ENCODE measurements at regions of chr4 and their contacts with region 1.

Region 1: DNA sequence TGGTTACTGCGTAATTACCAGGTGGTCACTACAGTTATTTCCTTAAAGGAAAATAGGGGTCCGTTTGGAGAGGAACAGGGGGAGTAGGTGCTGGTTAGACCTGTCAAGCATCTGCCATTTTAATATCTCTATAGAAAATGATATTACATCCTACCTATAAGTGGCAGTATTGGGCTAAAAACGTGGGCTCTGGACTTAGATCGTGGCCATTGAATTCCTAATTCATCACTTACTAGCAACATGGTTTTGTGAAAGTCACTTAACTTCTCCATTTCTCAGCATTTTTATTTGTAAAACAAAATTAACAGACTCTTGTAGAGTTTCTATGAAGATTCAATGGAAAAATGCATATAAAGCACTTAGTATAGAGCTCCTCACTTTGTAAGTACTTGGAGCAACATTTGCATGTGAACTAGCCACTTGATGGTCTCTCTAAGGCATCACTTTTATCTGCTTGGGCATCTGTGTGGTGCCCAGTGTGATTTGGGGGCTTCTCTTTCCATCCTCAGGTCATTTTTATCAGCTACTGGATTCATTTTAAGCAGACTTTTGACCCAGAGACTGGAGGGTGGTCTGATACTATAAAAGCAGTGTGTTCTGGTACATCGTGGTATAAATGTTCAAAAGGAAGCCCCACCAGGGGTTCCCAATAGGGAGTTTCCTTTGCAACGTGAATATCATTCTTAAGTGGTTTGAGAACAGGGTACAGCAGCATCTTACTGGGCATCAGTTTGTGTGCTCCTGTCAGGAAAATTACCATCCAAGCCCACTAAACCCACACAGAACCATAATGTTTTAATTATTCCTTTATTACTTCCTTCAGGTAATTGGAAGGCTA is 42.7 kb upstream of the RASSF6 start:
- DNase-seq: no peak
- ATAC-seq: peak; percentile 75 to 95 (median 92)
- H3K4me3 ChIP-seq: no peak overlapping the region
- H3K27ac ChIP-seq: no peak overlapping the region
- H3K4me1 ChIP-seq: no peaks in the 10 kb centered on the region
- H3K27me3 ChIP-seq: no peaks in the 10 kb centered on the region
- CTCF ChIP-seq: peak in 3 of 4 donors; percentile 32 to 49 (median 35)

Region 2: GRCh38 chr4:73573794-73574406 is 89.0 kb before region 1 on chr4:
- intact Hi-C with region 1: no loop called
- DNase-seq: peak; percentile 52 to 82 (median 70)
- ATAC-seq: peak; percentile 92 to 99 (median 97)
- H3K4me3 ChIP-seq: no peak overlapping the region
- H3K27ac ChIP-seq: peak overlapping the region in 1 of 4 donors; percentile 37
- H3K4me1 ChIP-seq: peaks cover 0 to 16% (median 15%) of the 10 kb centered on the region in 3 donors
- H3K27me3 ChIP-seq: no peaks in the 10 kb centered on the region
- CTCF ChIP-seq: peak; percentile 70 to 83 (median 73)

Region 3: DNA sequence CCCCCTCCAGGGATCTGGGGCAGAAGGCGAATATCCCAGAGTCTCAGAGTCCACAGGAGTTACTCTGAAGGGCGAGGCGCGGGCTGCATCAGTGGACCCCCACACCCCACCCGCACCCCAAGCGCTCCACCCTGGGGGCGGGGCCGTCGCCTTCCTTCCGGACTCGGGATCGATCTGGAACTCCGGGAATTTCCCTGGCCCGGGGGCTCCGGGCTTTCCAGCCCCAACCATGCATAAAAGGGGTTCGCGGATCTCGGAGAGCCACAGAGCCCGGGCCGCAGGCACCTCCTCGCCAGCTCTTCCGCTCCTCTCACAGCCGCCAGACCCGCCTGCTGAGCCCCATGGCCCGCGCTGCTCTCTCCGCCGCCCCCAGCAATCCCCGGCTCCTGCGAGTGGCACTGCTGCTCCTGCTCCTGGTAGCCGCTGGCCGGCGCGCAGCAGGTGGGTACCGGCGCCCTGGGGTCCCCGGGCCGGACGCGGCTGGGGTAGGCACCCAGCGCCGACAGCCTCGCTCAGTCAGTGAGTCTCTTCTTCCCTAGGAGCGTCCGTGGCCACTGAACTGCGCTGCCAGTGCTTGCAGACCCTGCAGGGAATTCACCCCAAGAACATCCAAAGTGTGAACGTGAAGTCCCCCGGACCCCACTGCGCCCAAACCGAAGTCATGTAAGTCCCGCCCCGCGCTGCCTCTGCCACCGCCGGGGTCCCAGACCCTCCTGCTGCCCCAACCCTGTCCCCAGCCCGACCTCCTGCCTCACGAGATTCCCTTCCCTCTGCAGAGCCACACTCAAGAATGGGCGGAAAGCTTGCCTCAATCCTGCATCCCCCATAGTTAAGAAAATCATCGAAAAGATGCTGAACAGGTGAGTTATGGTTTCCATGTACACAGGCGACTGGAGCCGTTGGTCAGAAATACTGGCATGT is 206.5 kb after region 1 on chr4 and contains the start of gene CXCL1:
- intact Hi-C with region 1: loop called in 2 of 3 experiments (anchors 10 kb)
- DNase-seq: peak; percentile 39 to 80 (median 52)
- ATAC-seq: peak; percentile 70 to 79 (median 74)
- H3K4me3 ChIP-seq: peak within 1 kb of the TSS; percentile 38 to 68 (median 46)
- H3K27ac ChIP-seq: peak within 1 kb of the TSS in 3 of 4 donors; percentile 6 to 78 (median 67)
- H3K4me1 ChIP-seq: no peaks in the 10 kb centered on the region
- H3K27me3 ChIP-seq: no peaks in the 10 kb centered on the region
- CTCF ChIP-seq: no peak
- total RNA-seq, gene CXCL1: 2.5 to 35.4 (median 6.3) TPM

Region 4: GRCh38 chr4:74038161-74039064 is 375.5 kb after region 1 on chr4 and contains the start of gene CXCL3:
- intact Hi-C with region 1: no loop called
- DNase-seq: peak; percentile 73 to 91 (median 84)
- ATAC-seq: peak; percentile 91 to 96 (median 94)
- H3K4me3 ChIP-seq: peak within 1 kb of the TSS; percentile 57 to 70 (median 64)
- H3K27ac ChIP-seq: peak within 1 kb of the TSS in 3 of 4 donors; percentile 1 to 79 (median 57)
- H3K4me1 ChIP-seq: no peaks in the 10 kb centered on the region
- H3K27me3 ChIP-seq: no peaks in the 10 kb centered on the region
- CTCF ChIP-seq: peak in 3 of 4 donors; percentile 13 to 31 (median 19)
- total RNA-seq, gene CXCL3: 0.60 to 7.3 (median 1.3) TPM

Region 5: DNA sequence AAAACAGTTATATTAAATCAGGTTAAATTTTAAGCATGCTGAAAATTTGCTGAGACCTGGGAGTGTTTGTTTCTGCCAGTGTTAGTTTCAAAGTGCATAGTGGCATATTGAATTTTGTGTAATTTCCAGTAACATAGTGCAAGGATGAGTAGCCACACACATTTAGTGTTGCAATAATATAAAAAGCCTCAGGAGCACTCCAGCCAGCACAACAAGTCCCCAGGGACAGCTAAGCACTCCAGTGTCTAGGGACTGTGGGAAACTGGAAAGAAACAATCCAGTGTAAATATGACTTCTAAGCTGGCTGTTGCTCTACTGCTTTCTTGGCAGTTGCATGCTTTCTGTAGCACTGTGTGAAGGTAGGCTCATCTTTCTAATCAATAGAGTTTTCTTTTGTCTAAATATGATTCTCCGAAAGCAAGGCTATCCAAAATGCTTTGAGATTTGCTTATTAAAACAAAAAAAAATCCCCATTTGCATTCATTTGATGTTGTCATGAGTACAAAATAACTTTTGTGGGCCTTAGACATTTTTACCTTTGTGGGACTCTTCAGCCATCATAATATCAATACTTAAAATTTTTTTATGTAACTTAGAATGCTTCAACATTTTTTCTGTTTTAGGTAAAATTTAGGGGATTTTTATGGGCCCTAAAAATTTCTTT is 460.3 kb after region 1 on chr4:
- intact Hi-C with region 1: loop called in 1 of 3 experiments (anchors 10 kb)
- DNase-seq: peak in 3 of 6 donors; percentile 32 to 40 (median 36)
- ATAC-seq: peak; percentile 60 to 99 (median 96)
- H3K4me3 ChIP-seq: no peak overlapping the region
- H3K27ac ChIP-seq: peak overlapping the region in 2 of 4 donors; percentile 24 to 42
- H3K4me1 ChIP-seq: peaks cover 5 to 19% (median 6%) of the 10 kb centered on the region in 3 donors
- H3K27me3 ChIP-seq: no peaks in the 10 kb centered on the region
- CTCF ChIP-seq: no peak

Region 6: GRCh38 chr4:74133786-74134499 is 471.0 kb after region 1 on chr4:
- intact Hi-C with region 1: loop called in 2 of 3 experiments (anchors 10 kb)
- DNase-seq: peak; percentile 67 to 87 (median 76)
- ATAC-seq: peak; percentile 95 to 100 (median 100)
- H3K4me3 ChIP-seq: no peak overlapping the region
- H3K27ac ChIP-seq: peak overlapping the region in 1 of 4 donors; percentile 36
- H3K4me1 ChIP-seq: peaks cover 0 to 10% (median 7%) of the 10 kb centered on the region in 3 donors
- H3K27me3 ChIP-seq: no peaks in the 10 kb centered on the region
- CTCF ChIP-seq: peak; percentile 62 to 75 (median 64)